Dorsolateral prefrontal cortex (tissue), 120 donors: ENCODE measurements at regions of chr1 and their contacts with region 1.

Region 1: GRCh38 chr1:45303582-45304310 is 22.9 kb upstream of the HPDL start:
- DNase-seq: peak; percentile 93 to 99 (median 97)
- H3K4me3 ChIP-seq: peak overlapping the region; percentile 48 to 99 (median 87)
- H3K27ac ChIP-seq: peak overlapping the region; percentile 23 to 97 (median 93)
- H3K27me3 ChIP-seq: no peaks in the 10 kb centered on the region
- CTCF ChIP-seq: peak; percentile 38 to 94 (median 81)

Region 2: DNA sequence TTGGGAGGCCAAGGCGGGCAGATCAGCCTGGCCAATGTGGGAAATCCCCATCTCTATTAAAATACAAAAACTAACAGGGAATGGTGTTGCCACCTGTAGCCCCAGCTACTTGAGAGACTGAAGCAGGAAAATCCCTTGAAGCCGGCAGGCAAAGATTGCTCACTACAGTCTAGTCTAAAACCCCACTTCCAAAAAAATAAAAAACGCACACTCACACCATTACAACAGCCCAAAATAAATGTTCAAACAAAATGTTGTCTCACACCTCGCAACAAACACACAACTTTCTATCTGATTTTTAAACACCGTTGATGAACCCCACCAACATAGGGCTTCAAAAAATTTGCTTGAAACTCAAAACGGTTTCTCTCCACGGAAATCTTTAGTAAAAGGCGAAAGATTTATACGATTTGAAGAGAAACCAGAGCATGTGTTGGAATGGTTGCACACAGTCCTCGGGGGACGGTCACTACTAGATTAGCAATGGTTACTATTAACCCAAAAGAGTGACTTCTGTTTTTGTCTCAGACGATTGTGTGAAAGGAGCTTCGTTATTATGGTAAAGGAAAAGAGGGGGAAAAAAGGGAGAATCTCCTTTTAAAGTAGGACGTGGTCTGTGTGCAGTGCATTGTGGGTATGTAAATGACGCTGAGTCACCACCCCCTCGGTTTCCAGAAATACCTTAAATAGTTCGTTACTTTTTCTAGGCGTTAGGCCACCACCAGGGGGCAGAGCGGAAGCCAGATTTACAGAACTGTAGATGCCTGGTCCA is 572.8 kb before region 1 on chr1 and contains the start of gene RNU5D-1:
- intact Hi-C with region 1: loop called (anchors 5 to 10 kb)
- DNase-seq: peak; percentile 83 to 99 (median 94)
- H3K4me3 ChIP-seq: peak within 1 kb of the TSS in 58 of 59 donors; percentile 11 to 62 (median 44)
- H3K27ac ChIP-seq: peak within 1 kb of the TSS; percentile 78 to 99 (median 96)
- H3K27me3 ChIP-seq: no peaks in the 10 kb centered on the region
- CTCF ChIP-seq: peak; percentile 72 to 97 (median 84)
- total RNA-seq, gene RNU5D-1: not detected

Region 3: GRCh38 chr1:44819608-44820327 is 484.0 kb before region 1 on chr1:
- intact Hi-C with region 1: loop called in 1 of 2 experiments (anchors 10 kb)
- DNase-seq: peak in 9 of 10 donors; percentile 49 to 72 (median 64)
- H3K4me3 ChIP-seq: peak overlapping the region; percentile 33 to 80 (median 63)
- H3K27ac ChIP-seq: peak overlapping the region; percentile 83 to 99 (median 96)
- H3K27me3 ChIP-seq: no peaks in the 10 kb centered on the region
- CTCF ChIP-seq: peak in 31 of 56 donors; percentile 4 to 49 (median 16)

Region 4: DNA sequence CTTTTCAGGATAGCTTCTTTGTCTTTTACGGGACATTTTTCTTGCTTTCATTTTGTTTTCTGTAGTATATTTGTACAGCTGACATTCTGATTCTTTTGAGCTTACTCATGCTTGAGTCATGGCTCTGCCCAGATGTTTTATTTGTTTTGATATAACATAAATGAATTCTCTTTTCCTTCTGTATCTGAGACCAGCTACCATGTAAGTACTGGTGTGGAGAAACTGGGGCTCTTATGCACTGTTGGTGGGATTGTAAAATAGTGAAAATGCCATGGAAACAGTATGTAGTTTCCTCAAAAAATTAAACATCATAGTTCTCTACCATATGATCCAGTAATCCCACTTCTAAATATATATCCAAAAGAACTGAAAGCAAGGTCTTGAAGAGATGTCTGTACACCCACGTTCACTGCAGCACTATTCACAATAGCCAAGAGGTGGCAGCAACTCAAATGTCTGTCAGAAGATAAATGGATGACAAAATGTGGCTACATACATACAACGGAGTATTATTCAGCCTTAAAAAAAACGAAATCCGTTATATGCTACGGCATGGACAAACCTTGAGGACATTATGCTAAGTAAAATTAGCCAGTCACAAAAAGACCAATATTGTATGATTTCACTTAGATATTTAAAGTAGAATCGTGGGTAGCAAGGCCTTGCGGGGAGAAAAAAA is 378.8 kb before region 1 on chr1:
- intact Hi-C with region 1: no loop called
- DNase-seq: no peak
- H3K4me3 ChIP-seq: no peak overlapping the region
- H3K27ac ChIP-seq: no peak overlapping the region
- H3K27me3 ChIP-seq: no peaks in the 10 kb centered on the region
- CTCF ChIP-seq: peak in 26 of 56 donors; percentile 7 to 41 (median 25)

Region 5: DNA sequence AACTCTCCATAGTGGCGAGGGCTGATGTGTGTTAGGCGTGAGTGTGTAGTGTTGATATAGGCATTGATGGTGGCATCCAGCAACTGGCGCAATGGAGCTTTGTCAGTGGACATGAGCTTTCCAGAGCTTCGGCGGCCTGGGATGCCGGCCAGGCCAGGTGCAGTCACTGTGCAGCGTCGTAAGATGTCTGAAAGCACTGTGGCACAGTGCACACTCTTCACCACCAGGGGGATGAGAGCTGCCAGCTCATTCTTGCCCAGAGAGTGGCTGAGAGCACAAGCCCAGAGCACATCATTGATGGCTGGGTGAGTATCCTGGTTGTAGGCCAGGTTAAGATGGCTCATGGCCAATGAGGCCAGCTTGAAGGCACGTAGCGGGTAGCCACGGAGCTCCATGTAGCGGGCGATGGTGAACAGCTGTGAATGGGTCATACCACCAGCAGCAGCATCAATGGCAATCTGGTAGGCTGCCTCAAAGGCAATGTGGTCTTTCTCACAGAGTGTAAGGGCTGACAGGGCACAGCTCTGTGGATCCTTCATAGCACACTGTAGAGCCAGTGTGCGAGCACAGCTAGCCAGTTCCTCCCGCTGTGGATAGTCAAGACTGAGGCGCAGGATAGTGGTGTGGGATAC is 285.0 kb before region 1 on chr1:
- intact Hi-C with region 1: loop called (anchors 1 kb)
- DNase-seq: peak; percentile 42 to 88 (median 64)
- H3K4me3 ChIP-seq: peak overlapping the region in 1 of 59 donors; percentile 9
- H3K27ac ChIP-seq: peak overlapping the region in 18 of 59 donors; percentile 3 to 64 (median 29)
- H3K27me3 ChIP-seq: no peaks in the 10 kb centered on the region
- CTCF ChIP-seq: peak; percentile 47 to 85 (median 72)

Region 6: DNA sequence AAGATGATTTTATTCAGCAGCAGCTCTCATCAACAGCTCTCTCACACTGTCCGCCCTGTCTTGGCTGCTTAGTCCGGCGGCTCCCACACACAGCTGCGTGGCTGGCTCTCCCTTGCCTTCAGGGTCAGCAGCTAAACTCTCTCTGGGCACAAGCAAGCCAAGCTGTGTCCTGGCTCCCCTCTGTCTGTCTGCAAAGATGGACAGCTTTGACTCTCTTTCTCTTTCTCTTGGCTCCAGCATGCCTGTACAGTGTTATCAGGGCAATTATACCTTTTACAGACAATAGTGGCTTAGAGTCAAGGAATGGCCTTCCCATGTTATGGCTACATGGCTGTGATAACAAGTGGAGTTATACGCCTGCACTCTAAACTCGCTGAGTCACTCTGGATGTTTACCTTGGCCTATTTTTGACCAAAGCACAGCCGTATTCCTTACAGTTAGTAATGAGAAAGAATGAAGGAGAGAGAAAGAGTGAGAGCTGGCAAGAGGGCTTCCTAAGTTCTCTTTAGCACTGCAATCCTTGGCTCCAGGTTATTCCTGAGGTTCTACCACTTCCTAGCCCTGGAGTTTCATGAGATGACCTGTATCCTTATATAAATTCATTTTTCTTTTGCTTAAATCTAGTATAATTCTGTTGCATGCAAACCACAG is 37.5 kb before region 1 on chr1:
- intact Hi-C with region 1: no loop called
- DNase-seq: peak in 1 of 10 donors; percentile 29
- H3K4me3 ChIP-seq: no peak overlapping the region
- H3K27ac ChIP-seq: peak overlapping the region in 17 of 59 donors; percentile 17 to 83 (median 42)
- H3K27me3 ChIP-seq: no peaks in the 10 kb centered on the region
- CTCF ChIP-seq: no peak

Region 7: DNA sequence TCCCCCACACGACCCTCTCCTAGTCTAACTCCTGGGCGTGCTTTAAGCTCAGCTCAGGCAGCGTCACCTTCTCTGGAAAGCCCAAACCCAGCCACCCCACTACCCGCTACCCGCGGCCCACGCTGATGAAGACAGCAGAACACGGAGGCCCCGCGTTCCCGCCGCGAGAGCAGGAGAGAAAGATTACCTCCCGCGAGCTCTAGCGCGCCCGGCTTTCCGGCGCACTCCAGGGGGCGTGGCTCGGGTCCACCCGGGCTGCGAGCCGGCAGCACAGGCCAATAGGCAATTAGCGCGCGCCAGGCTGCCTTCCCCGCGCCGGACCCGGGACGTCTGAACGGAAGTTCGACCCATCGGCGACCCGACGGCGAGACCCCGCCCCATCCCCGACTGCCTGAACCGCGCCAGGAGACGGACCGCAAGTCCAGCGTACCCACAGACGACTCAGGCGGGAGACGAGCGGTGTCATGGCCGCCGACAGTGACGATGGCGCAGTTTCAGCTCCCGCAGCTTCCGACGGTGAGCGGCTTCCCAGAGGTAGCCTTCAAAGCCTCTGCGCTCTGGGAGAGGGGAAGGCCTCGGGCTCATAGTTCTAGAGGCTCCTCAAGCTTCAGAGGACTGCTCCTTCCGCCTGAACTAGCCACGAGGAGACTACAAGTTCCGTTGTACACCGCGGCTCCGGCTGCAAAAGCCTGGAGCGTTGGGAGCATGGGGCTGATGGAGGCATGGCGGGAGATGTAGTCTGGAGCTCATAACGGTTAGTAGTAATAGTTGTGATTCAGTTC is 36.2 kb after region 1 on chr1 and contains the starts of genes MUTYH and TOE1:
- intact Hi-C with region 1: loop called (anchors 1 to 5 kb)
- DNase-seq: peak; percentile 80 to 92 (median 89)
- H3K4me3 ChIP-seq: peak within 1 kb of the TSS; percentile 65 to 98 (median 89)
- H3K27ac ChIP-seq: peak within 1 kb of the TSS; percentile 84 to 100 (median 97)
- H3K27me3 ChIP-seq: no peaks in the 10 kb centered on the region
- CTCF ChIP-seq: peak in 42 of 56 donors; percentile 5 to 65 (median 26)
- total RNA-seq, gene MUTYH: 18.4 to 56.7 (median 33.5) TPM
- total RNA-seq, gene TOE1: 3.3 to 10.9 (median 7.1) TPM

Region 8: DNA sequence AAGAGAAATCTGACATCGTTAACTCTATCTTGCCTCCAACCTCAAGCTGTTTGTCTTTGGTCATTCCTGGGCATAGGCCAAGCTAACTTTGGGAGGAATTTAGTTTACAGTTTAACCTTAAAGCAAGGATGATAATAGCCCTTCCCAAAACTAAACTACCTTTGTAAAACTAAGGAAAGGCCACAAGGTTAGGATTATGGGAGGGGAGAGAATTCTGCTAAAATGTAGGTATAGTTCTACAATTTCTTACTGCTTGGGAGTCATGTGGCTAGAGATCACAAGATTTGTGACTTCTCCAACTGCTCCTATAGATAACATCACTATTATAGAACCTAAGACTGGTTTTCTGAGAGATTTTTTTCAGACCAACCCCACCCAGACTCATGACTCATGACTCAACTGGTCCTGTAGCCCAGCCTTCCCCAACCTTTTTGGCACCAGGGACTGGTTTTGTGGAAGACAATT is 107.1 kb after region 1 on chr1:
- intact Hi-C with region 1: no loop called
- DNase-seq: no peak
- H3K4me3 ChIP-seq: no peak overlapping the region
- H3K27ac ChIP-seq: no peak overlapping the region
- H3K27me3 ChIP-seq: no peaks in the 10 kb centered on the region
- CTCF ChIP-seq: no peak